ENCODE measurements at regions of chr12 and their contacts with region 1.

Region 1: DNA sequence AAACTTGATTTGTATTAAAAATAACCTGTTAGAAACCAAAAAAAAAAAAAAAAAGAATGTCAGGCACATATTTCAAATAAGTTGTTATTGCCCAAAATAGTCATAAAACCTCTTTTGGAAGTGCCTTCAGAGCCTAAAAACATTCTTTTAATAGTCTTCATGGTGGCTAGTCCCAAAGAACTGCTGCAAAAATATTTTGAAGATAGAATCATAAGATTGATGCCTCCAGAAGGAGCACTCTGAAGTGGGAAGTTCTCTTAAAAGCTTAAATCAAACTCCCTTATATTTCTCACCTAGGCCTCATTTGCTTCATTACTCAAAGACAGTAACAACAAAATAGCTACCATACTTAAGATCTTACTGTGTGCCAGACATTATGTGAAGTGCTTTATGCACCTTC is 27.2 kb upstream of the NT5DC3 start:
- DNase-seq: no peak
- H3K4me3 ChIP-seq: no peak overlapping the region
- H3K27ac ChIP-seq: peak overlapping the region; percentile 89 to 99 (median 94)
- H3K4me1 ChIP-seq: peaks cover 0 to 55% (median 40%) of the 10 kb centered on the region in 4 donors
- H3K27me3 ChIP-seq: no peaks in the 10 kb centered on the region
- CTCF ChIP-seq: no peak
- EP300 ChIP-seq: peak in 1 of 4 donors; percentile 55
- POLR2A ChIP-seq: no peak

Region 2: DNA sequence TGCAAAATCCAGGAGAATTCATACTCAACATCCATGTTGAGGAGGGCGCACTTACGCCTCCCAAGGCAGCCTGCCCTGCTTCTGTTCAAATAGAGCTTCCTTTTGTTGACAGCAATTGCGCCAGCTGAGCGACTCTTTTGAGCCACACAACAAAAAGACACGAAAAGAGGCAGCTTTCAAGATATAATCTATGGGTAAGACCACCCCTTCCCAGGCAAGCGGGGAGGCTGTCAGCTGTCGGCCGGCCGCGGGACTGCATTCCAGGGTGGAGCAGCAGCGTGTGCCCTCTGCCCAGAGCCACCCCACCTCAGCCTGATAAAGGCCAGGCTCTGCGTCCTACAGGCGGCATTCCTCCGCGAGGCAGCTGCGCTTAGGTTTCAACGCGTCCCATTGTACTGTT is 296.9 kb before region 1 on chr12:
- intact Hi-C with region 1: loop called (anchors 1 kb)
- DNase-seq: no peak
- H3K4me3 ChIP-seq: peak overlapping the region in 3 of 4 donors; percentile 15 to 33 (median 25)
- H3K27ac ChIP-seq: peak overlapping the region in 3 of 4 donors; percentile 23 to 66 (median 57)
- H3K4me1 ChIP-seq: peaks cover 0 to 21% (median 8%) of the 10 kb centered on the region in 4 donors
- H3K27me3 ChIP-seq: no peaks in the 10 kb centered on the region
- CTCF ChIP-seq: no peak
- EP300 ChIP-seq: no peak
- POLR2A ChIP-seq: no peak

Region 3: DNA sequence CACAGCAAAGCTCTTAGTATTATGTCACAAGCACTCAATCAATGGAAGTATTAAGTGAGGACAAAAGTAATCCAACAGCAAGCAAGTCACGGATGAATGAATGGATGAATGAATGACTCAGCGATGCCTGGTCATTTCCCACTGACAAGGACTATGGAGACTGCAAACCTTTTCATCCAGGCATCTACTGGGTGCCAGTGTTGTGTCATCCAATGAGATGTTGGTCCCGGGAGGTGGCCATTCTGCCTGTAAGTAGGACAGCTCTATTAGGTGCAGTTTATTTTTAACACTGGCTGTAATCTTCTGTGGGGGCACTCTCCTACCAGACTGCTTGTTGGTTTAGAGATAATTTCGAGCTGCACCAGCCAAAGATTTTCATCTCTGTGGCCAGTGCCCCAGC is 241.7 kb before region 1 on chr12:
- intact Hi-C with region 1: loop called (anchors 5 kb)
- DNase-seq: peak; percentile 83
- H3K4me3 ChIP-seq: no peak overlapping the region
- H3K27ac ChIP-seq: peak overlapping the region in 3 of 4 donors; percentile 56 to 69 (median 65)
- H3K4me1 ChIP-seq: peaks cover 0 to 26% (median 24%) of the 10 kb centered on the region in 4 donors
- H3K27me3 ChIP-seq: no peaks in the 10 kb centered on the region
- CTCF ChIP-seq: peak in 3 of 4 experiments; percentile 23 to 50 (median 33)
- EP300 ChIP-seq: no peak
- POLR2A ChIP-seq: no peak

Region 4: DNA sequence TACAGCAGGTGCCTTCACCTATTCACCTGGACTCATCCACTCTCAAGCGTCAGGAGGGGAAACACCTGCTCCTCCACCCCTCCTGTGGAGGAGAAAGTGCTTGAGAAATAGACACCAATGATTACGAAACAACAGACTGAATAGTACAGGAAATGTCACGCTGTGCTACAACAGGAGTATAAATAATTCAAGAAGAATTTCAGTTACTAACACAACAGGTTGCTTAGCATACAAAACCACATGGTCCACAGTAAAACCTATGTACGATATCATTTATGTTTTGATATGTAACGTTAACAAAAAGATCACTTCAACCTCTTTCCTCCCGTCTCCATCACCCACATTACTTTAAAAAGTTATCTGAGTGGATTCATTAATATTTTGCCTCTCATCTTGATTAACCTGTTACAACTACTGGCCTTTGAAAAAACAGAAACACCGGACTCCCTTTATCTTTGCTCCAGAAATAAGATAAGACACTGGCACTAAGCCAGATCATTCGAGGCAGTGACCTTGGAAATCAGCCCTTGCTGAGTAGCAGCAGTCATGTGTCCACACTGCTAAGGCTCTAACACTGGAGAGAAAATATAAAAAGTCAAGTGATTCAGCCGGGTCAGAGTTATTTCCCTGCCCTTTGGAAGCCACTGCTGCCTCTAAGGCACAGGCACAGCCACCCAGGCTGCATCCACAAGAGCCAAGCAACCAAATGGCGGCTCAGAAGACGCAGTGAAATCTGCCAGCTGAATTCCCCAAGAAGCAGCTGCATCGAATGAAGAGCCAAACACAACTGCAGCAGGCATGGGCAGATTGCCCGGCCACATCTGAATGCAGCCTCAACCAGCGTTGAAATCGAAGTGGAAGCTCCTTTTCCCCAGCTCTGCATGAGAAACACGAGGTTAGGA is 68.1 kb before region 1 on chr12:
- intact Hi-C with region 1: loop called (anchors 5 kb)
- DNase-seq: peak; percentile 83
- H3K4me3 ChIP-seq: no peak overlapping the region
- H3K27ac ChIP-seq: peak overlapping the region; percentile 72 to 99 (median 78)
- H3K4me1 ChIP-seq: peaks cover 0 to 96% (median 86%) of the 10 kb centered on the region in 4 donors
- H3K27me3 ChIP-seq: no peaks in the 10 kb centered on the region
- CTCF ChIP-seq: no peak
- EP300 ChIP-seq: peak in 2 of 4 donors; percentile 33
- POLR2A ChIP-seq: no peak

Region 5: GRCh38 chr12:103811791-103812190 is 56.4 kb before region 1 on chr12:
- intact Hi-C with region 1: no loop called
- DNase-seq: no peak
- H3K4me3 ChIP-seq: no peak overlapping the region
- H3K27ac ChIP-seq: peak overlapping the region in 3 of 4 donors; percentile 49 to 99 (median 75)
- H3K4me1 ChIP-seq: peaks cover 0 to 98% (median 96%) of the 10 kb centered on the region in 4 donors
- H3K27me3 ChIP-seq: no peaks in the 10 kb centered on the region
- CTCF ChIP-seq: no peak
- EP300 ChIP-seq: no peak
- POLR2A ChIP-seq: no peak

Region 6: DNA sequence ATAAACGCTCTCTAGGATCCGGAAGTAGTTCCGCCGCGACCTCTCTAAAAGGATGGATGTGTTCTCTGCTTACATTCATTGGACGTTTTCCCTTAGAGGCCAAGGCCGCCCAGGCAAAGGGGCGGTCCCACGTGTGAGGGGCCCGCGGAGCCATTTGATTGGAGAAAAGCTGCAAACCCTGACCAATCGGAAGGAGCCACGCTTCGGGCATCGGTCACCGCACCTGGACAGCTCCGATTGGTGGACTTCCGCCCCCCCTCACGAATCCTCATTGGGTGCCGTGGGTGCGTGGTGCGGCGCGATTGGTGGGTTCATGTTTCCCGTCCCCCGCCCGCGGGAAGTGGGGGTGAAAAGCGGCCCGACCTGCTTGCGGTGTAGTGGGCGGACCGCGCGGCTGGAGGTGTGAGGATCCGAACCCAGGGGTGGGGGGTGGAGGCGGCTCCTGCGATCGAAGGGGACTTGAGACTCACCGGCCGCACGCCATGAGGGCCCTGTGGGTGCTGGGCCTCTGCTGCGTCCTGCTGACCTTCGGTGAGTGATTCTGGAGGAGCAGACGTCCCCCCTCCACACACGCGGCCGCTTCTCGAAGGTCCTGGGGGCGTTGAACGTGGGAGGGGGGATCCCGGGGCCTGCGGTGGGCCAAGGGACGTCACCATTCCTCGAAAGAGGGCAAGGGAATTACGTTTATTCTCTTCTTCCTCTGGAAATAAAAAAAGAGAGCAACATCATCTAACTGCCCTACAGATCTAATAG is 62.0 kb after region 1 on chr12 and contains the start of gene HSP90B1:
- intact Hi-C with region 1: no loop called
- DNase-seq: peak; percentile 100
- H3K4me3 ChIP-seq: peak within 1 kb of the TSS; percentile 68 to 84 (median 78)
- H3K27ac ChIP-seq: peak within 1 kb of the TSS; percentile 89 to 96 (median 95)
- H3K4me1 ChIP-seq: peaks cover 0 to 57% (median 47%) of the 10 kb centered on the region in 4 donors
- H3K27me3 ChIP-seq: no peaks in the 10 kb centered on the region
- CTCF ChIP-seq: no peak
- EP300 ChIP-seq: peak in 1 of 4 donors; percentile 38
- POLR2A ChIP-seq: peak; percentile 75 to 90
- total RNA-seq, gene HSP90B1: 206 to 299 (median 222) TPM

Region 7: DNA sequence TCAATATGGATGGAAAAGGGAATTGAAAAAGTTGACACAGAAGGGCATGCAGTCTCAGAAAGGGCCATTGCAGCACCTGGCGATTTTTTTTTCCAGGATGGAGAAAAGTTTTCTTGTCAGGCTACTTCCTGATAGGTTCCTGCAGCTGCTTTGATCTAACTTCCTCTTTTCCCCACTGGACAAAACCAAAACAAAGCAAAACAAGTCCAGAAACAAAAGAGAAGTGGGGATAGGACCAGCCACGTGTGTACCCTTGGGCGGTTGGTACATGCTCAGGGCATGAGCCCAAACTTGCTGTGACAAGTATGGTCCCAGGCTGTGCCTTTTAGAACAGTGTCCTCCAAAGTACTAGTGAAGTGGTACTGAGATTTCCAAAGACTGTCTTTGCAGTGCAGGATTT is 678.4 kb after region 1 on chr12:
- intact Hi-C with region 1: no loop called
- DNase-seq: no peak
- H3K4me3 ChIP-seq: no peak overlapping the region
- H3K27ac ChIP-seq: no peak overlapping the region
- H3K4me1 ChIP-seq: peaks cover 0 to 7% (median 0%) of the 10 kb centered on the region in 4 donors
- H3K27me3 ChIP-seq: no peaks in the 10 kb centered on the region
- CTCF ChIP-seq: no peak
- EP300 ChIP-seq: no peak
- POLR2A ChIP-seq: no peak